ENCODE measurements at regions of chr1 and their contacts with region 1.

Region 1: GRCh38 chr1:150259758-150260669 is 2.4 kb downstream of the CA14 start:
- DNase-seq: no peak
- ATAC-seq: peak; percentile 47

Region 2: GRCh38 chr1:150010393-150011115 is 249.5 kb before region 1 on chr1 and contains the start of gene OTUD7B:
- intact Hi-C with region 1: no loop called
- DNase-seq: peak; percentile 89
- ATAC-seq: peak; percentile 98
- total RNA-seq, gene OTUD7B: 24.5 TPM

Region 3: DNA sequence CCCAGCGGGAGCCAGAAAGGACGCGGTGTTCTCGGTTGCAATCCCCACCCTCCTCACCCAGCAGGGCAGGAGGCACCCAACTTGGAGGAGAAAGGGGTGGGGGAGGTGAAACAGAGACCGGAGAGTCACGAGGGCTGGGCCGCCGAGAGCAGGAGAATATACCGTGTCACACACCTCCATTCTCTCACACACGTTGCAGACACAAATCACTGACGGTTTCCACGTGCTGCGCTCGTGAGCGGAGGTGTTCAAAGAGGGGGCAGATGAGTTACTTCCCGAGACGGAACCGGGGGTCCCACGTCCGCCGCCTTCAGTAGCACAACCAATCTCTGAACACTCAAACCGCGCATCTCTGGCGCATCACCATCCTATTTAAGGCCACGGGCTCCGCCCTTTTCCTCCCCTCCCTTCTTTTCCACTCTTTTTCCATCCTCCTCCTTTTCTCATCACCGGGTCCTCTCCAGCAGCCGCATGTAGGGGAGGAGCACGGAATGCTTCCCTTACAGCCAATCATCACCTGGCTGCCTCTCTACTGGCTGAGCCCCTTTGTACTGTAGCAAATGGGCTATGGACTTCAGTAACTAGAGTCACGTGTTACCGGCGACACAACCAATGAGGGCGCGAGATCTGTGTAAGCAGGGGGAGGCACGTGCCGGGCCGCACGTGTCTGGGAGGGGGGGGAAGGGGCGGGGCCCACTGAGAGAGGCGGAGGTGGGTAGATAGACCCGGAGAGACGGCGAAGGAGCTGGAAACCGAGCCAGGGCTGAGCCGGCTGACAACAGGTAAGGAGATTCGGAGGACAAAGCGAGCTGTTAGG is 22.0 kb after region 1 on chr1 and contains the start of gene CIART:
- intact Hi-C with region 1: loop called (anchors 1 kb)
- DNase-seq: peak; percentile 96
- ATAC-seq: peak; percentile 97
- total RNA-seq, gene CIART: 12.8 TPM

Measured in Right ventricle myocardium inferior (tissue), 1 donor.